ENCODE measurements at regions of chr15 and their contacts with region 1.

Region 1: DNA sequence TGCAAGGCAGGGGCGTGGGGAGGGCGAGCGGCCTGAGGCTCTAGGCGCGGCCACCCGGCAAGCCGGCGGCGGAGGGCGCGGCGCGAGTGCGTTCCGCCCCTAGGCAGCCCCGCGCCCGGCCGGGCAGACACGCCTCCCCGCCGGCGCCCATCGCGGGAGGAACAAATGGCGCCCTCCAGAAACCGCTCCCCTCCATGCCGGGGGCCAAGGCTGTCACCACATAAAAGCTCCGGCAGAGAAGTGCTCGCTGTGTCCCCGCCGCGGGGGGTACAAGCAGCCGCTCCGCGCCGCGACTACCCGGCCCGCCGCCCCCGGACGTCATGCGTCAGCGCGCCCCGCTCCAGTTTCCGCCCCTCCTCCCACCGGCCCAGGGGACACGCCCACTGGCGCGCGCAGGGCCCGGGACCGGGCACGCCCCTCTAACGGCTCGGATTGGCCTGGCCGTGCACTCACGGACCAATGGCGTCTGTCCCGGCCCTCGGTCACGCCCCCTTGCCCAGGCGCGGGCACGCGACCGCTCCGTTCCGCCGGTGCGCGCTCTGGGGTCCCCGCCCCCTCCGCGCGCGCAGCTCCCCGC is 391 bp upstream of the KLF13 start:
- DNase-seq: peak; percentile 97 to 99
- H3K4me3 ChIP-seq: peak overlapping the region; percentile 92
- H3K4me3 Mint-ChIP-seq: peak overlapping the region; percentile 86
- H3K27ac Mint-ChIP-seq: peak overlapping the region; percentile 76
- H3K4me1 ChIP-seq: peaks cover 11% of the 10 kb centered on the region
- H3K4me1 Mint-ChIP-seq: no peaks in the 10 kb centered on the region
- H3K27me3 ChIP-seq: no peaks in the 10 kb centered on the region
- H3K27me3 Mint-ChIP-seq: no peaks in the 10 kb centered on the region
- CTCF ChIP-seq: no peak

Region 2: GRCh38 chr15:31091481-31091880 is 234.8 kb before region 1 on chr15:
- CTCF ChIA-PET with region 1: no interaction called
- POLR2A ChIA-PET with region 1: no interaction called
- intact Hi-C with region 1: no loop called
- DNase-seq: no peak
- H3K4me3 ChIP-seq: no peak overlapping the region
- H3K4me3 Mint-ChIP-seq: no peak overlapping the region
- H3K27ac Mint-ChIP-seq: no peak overlapping the region
- H3K4me1 ChIP-seq: 0 out of 2 replicates have a peak, but pooled peaks cover 3% of the 10 kb centered on the region
- H3K4me1 Mint-ChIP-seq: no peaks in the 10 kb centered on the region
- H3K27me3 ChIP-seq: no peaks in the 10 kb centered on the region
- H3K27me3 Mint-ChIP-seq: no peaks in the 10 kb centered on the region
- CTCF ChIP-seq: no peak

Region 3: DNA sequence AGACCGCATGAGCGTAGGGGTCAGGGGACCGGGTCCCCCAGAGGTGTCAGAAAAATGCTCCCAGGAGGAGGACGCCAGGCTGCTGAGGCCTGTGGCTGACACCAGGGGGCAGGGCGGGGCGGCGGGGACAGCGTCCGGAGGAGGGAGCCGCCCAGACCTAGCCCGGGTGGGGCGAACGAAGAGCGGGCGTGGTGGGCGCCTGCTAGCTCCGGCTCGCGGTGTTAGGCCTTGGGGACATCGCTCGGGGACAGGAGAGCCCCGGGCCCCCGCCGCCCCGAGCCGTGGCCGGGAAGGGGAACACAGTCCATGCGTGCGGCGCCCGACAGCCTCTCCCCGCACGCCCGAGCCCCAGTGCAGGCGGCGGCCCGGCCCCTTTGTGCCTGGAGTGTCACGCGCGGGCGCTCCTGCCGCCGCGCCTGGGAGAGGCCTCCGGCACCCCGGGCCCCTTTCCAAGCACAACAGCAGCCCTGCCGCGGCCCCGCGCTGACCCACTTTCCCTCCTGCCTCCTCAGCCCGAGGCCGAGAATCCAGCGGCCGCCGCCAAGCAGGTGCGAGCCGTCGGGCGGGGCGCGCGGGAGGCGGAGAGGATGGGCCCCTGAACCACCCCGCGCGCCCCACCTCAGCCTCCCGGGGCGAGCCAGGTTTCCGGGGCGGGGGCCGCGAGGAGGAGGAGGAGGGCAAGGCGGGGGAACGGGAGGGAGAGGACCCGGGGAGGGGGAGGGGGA is 110.6 kb before region 1 on chr15:
- CTCF ChIA-PET with region 1: no interaction called
- POLR2A ChIA-PET with region 1: no interaction called
- intact Hi-C with region 1: loop called (anchors 5 kb)
- DNase-seq: peak; percentile 72 to 84
- H3K4me3 ChIP-seq: peak overlapping the region; percentile 57
- H3K4me3 Mint-ChIP-seq: peak overlapping the region; percentile 67
- H3K27ac Mint-ChIP-seq: no peak overlapping the region
- H3K4me1 ChIP-seq: peaks cover 8% of the 10 kb centered on the region; the same call in 1 of the 2 replicates
- H3K4me1 Mint-ChIP-seq: no peaks in the 10 kb centered on the region
- H3K27me3 ChIP-seq: no peaks in the 10 kb centered on the region
- H3K27me3 Mint-ChIP-seq: no peaks in the 10 kb centered on the region
- CTCF ChIP-seq: peak; percentile 93 to 94

Region 4: GRCh38 chr15:31296646-31297574 is 29.3 kb before region 1 on chr15:
- CTCF ChIA-PET with region 1: interaction called, 3 read pairs
- POLR2A ChIA-PET with region 1: no interaction called
- intact Hi-C with region 1: loop called (anchors 1 kb)
- DNase-seq: peak; percentile 92 to 95
- H3K4me3 ChIP-seq: no peak overlapping the region
- H3K4me3 Mint-ChIP-seq: peak overlapping the region; percentile 67
- H3K27ac Mint-ChIP-seq: peak overlapping the region; percentile 91
- H3K4me1 ChIP-seq: peaks cover 31% of the 10 kb centered on the region
- H3K4me1 Mint-ChIP-seq: peaks cover 23% of the 10 kb centered on the region
- H3K27me3 ChIP-seq: no peaks in the 10 kb centered on the region
- H3K27me3 Mint-ChIP-seq: peaks cover under 1% of the 10 kb centered on the region
- CTCF ChIP-seq: peak in 1 of 2 experiments; percentile 38

Region 5: GRCh38 chr15:31372635-31373091 is 46.4 kb after region 1 on chr15:
- CTCF ChIA-PET with region 1: no interaction called
- POLR2A ChIA-PET with region 1: no interaction called
- intact Hi-C with region 1: loop called (anchors 1 kb)
- DNase-seq: peak; percentile 81 to 85
- H3K4me3 ChIP-seq: no peak overlapping the region
- H3K4me3 Mint-ChIP-seq: no peak overlapping the region
- H3K27ac Mint-ChIP-seq: no peak overlapping the region
- H3K4me1 ChIP-seq: peaks cover 30% of the 10 kb centered on the region
- H3K4me1 Mint-ChIP-seq: peaks cover 5% of the 10 kb centered on the region
- H3K27me3 ChIP-seq: no peaks in the 10 kb centered on the region
- H3K27me3 Mint-ChIP-seq: no peaks in the 10 kb centered on the region
- CTCF ChIP-seq: no peak

Region 6: DNA sequence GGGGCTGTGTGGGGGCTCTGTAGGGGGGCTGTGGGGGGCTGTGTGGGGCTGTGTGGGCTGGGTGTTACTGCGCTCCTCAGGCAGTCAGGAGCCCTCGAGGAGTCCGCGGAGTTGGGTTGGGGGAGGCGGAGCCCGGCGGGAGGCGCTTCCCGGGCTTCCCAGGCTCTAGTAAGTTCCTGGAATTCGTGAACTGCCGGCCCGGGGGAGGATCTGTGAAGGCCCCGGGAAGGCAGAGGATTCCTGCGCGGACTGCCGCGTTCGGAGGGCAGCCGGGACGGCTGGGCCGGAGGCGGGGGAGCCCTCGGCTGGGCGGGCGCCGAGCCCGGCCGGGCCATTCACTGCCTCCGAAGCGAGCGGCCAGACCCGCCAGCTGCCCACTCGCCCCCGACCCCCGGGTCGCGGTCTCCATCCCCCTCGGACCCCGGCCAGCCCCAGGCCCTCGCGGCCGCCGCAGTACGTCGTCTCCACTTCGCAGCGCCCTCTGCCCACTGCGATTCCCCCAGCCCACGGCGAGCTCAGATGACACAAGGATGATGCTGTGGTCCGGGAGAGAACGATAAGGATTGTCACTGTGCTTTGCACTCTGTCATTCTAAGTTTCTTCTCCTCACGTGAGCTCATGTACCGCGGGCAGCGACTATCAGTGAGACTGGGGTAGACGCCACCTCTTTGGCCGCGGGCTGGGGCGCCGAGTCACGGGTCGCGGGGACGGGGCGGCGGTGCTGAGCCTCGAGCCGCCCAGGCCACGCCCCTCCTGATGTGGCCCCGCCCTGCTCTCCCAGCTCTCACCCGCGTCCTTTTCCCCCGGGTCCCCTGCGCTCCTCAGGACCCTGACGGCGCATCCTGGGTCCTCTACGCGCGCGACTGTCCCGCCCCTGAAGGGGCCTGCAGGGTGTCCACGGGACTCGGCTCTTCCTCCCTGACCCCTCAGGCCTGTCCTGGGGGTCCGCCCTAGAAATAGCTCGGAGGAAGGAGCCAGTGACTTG is 65.7 kb after region 1 on chr15:
- CTCF ChIA-PET with region 1: no interaction called
- POLR2A ChIA-PET with region 1: no interaction called
- intact Hi-C with region 1: loop called (anchors 2 kb)
- DNase-seq: peak; percentile 70 to 78
- H3K4me3 ChIP-seq: peak overlapping the region; percentile 69
- H3K4me3 Mint-ChIP-seq: peak overlapping the region; percentile 86
- H3K27ac Mint-ChIP-seq: peak overlapping the region; percentile 20
- H3K4me1 ChIP-seq: peaks cover 8% of the 10 kb centered on the region
- H3K4me1 Mint-ChIP-seq: peaks cover 19% of the 10 kb centered on the region
- H3K27me3 ChIP-seq: no peaks in the 10 kb centered on the region
- H3K27me3 Mint-ChIP-seq: no peaks in the 10 kb centered on the region
- CTCF ChIP-seq: no peak

Region 7: DNA sequence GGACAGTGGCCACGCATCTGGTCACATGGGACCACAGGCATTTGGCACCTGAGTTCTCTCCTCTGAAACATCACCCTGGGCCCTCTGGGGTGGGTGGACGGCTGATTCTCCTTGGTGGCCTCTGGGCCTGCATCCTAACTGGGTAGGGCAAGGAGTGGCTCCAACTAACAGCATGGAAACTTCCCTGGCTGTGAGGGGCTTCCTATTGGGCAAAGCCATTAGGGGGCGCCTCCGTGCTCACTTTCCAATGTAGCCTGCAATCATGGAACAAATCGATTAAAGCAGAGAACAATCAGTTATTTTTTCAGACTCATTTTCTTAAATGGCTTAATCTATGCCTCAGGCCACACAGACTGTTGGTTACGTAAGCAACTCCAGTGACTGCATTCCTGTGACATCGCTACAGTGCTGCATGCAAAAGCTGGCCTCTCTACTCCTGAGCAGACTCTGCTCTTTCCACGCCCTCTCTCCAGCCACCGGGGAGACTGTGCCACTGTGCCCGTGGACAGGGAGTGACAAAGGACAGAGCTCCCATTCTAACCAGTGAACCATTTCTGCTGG is 279.2 kb after region 1 on chr15:
- CTCF ChIA-PET with region 1: no interaction called
- POLR2A ChIA-PET with region 1: no interaction called
- intact Hi-C with region 1: no loop called
- DNase-seq: peak in 1 of 2 experiments; percentile 22
- H3K4me3 ChIP-seq: no peak overlapping the region
- H3K4me3 Mint-ChIP-seq: no peak overlapping the region
- H3K27ac Mint-ChIP-seq: no peak overlapping the region
- H3K4me1 ChIP-seq: no peaks in the 10 kb centered on the region
- H3K4me1 Mint-ChIP-seq: no peaks in the 10 kb centered on the region
- H3K27me3 ChIP-seq: no peaks in the 10 kb centered on the region
- H3K27me3 Mint-ChIP-seq: peaks cover 4% of the 10 kb centered on the region
- CTCF ChIP-seq: no peak